ENCODE measurements at regions of chr11 and their contacts with region 1.

Region 1: DNA sequence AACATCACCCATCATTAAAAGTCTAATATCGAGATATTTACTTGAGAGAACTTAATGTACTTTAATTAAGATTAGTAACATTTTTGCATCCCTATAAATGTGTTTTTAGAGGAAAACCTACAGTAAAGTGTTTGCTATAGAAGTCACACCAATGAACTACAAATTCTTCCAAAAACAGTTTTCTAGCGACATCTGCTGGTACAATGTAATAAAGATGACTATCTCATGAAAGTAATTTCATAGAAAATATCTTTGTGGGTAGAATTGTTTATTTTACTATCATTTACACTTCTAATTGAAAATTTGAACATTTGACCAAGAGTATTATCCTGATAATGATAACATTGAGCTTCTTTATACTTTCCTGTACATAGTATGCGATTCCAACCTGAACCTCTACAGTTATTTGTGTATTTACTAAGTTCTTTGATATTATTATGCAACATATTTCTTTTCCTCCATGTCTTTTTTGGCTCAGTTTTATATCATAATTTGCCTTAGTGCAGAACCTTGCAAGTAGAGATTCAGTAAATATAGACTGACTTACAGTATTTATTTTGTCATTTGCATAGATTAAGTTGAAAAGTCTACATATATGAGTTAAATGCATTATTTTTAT is 252.7 kb downstream of the TMEM135 start:
- DNase-seq: no peak
- H3K4me3 ChIP-seq: no peak overlapping the region
- H3K27ac ChIP-seq: no peak overlapping the region
- H3K4me1 ChIP-seq: no peaks in the 10 kb centered on the region
- H3K27me3 ChIP-seq: no peaks in the 10 kb centered on the region
- CTCF ChIP-seq: peak; percentile 62 to 70 (median 64)
- POLR2A ChIP-seq: no peak

Region 2: DNA sequence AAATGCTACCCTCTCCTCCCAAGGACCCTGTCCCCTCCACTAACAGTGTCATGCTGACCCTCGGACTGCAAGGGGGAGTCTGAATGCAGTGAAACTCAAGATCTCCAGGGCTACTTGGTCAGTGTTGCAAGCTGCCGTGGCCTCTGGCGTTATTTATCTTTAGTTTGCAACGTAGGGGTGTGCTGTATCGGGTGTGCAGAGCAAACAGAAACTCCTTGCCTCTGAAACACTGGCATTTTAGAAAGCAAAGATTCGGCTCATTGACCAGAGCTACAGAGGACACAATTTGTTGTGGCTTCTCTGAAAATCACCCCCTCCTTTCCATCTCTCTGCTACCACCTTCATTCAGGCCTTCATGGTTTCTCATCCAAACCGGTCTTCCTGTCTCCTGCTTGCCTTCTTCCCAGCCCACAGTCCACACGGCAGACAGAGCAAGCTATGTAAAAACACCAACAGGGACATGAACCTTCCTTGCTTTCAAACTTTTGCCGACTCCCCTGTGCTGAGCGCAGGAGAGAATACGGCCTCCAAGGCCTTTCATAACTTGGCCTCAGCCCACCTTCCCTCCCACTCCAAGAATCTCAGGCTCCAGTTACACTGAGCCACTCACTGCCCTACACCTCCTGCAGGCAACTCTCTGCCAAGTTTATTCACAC is 350.2 kb before region 1 on chr11:
- intact Hi-C with region 1: loop called (anchors 5 kb)
- DNase-seq: peak; percentile 76 to 78
- H3K4me3 ChIP-seq: peak overlapping the region in 1 of 2 donors; percentile 18
- H3K27ac ChIP-seq: peak overlapping the region; percentile 79 to 81
- H3K4me1 ChIP-seq: peaks cover 13% of the 10 kb centered on the region in 2 donors
- H3K27me3 ChIP-seq: no peaks in the 10 kb centered on the region
- CTCF ChIP-seq: peak in 1 of 4 experiments; percentile 11
- POLR2A ChIP-seq: no peak